IMR-90 (cell line): ENCODE measurements at regions of chr15 and their contacts with region 1.

Region 1: DNA sequence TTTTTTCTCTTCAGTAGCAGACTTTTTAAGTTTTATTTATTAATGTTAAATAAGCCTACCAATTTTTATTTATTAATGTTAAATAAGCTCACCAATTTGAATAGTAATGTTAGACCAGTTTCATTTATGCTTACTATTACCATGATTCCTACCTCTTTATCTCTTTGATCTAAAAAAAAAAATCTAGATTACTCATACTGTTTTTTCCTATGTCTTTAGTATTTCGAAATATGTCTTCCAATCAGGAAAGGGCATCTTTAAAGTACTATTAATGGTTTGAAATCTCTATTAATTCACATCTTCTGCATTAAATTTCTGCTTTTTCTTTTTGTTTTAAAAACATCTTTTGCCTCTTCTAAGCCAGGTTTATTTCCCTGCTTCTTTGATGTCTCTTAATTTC is 27.5 kb upstream of the MAPKBP1 start:
- DNase-seq: peak; percentile 23
- ATAC-seq: no peak
- H3K4me3 ChIP-seq: no peak overlapping the region
- H3K27ac ChIP-seq: no peak overlapping the region
- H3K4me1 ChIP-seq: no peaks in the 10 kb centered on the region
- H3K27me3 ChIP-seq: no peaks in the 10 kb centered on the region
- CTCF ChIP-seq: no peak
- POLR2A ChIP-seq: no peak
- RAD21 ChIP-seq: no peak

Region 2: GRCh38 chr15:41713047-41713446 is 33.8 kb before region 1 on chr15:
- CTCF ChIA-PET with region 1: no interaction called
- POLR2A ChIA-PET with region 1: no interaction called
- dilution Hi-C with region 1: no loop called
- in situ Hi-C with region 1: no loop called
- intact Hi-C with region 1: loop called (anchors 5 kb)
- DNase-seq: peak; percentile 39
- ATAC-seq: peak; percentile 56
- H3K4me3 ChIP-seq: no peak overlapping the region
- H3K27ac ChIP-seq: no peak overlapping the region
- H3K4me1 ChIP-seq: no peaks in the 10 kb centered on the region
- H3K27me3 ChIP-seq: no peaks in the 10 kb centered on the region
- CTCF ChIP-seq: no peak
- POLR2A ChIP-seq: no peak
- RAD21 ChIP-seq: no peak